GM12878 (cell line): ENCODE measurements at regions of chr16 and their contacts with region 1.

Region 1: GRCh38 chr16:89708441-89708931 is 7.0 kb upstream of the SPATA2L start:
- DNase-seq: no peak
- ATAC-seq: no peak
- H3K4me3 ChIP-seq: no peak overlapping the region
- H3K27ac ChIP-seq: no peak overlapping the region
- H3K4me1 ChIP-seq: no peaks in the 10 kb centered on the region
- H3K27me3 ChIP-seq: no peaks in the 10 kb centered on the region
- CTCF ChIP-seq: no peak
- EP300 ChIP-seq: no peak
- POLR2A ChIP-seq: no peak
- RAD21 ChIP-seq: no peak

Region 2: GRCh38 chr16:88633684-88634140 is 1074.8 kb before region 1 on chr16:
- CTCF ChIA-PET with region 1: no interaction called
- POLR2A ChIA-PET with region 1: no interaction called
- RAD21 ChIA-PET with region 1: no interaction called
- SMC1A ChIA-PET with region 1: no interaction called
- in situ Hi-C with region 1: no loop called
- intact Hi-C with region 1: no loop called
- DNase-seq: peak; percentile 55
- ATAC-seq: peak; percentile 77
- H3K4me3 ChIP-seq: peak overlapping the region; percentile 95; the same call in 1 of the 2 replicates
- H3K27ac ChIP-seq: peak overlapping the region; percentile 52
- H3K4me1 ChIP-seq: peaks cover 22% of the 10 kb centered on the region
- H3K27me3 ChIP-seq: peaks cover 4 to 6% of the 10 kb centered on the region in 2 experiments; a peak in 2 of 4 replicates
- CTCF ChIP-seq: peak; percentile 37 to 68 (median 65); a peak in 5 of 6 replicates
- EP300 ChIP-seq: no peak
- POLR2A ChIP-seq: no peak
- RAD21 ChIP-seq: peak; percentile 47; the same call in 1 of the 2 replicates

Region 3: GRCh38 chr16:89720813-89721545 is 12.5 kb after region 1 on chr16 and contains the starts of genes VPS9D1 and ZNF276:
- CTCF ChIA-PET with region 1: interaction called, 12 read pairs
- POLR2A ChIA-PET with region 1: interaction called, 3 read pairs
- RAD21 ChIA-PET with region 1: interaction called, 6 read pairs
- SMC1A ChIA-PET with region 1: interaction called, 5 read pairs
- in situ Hi-C with region 1: no loop called
- intact Hi-C with region 1: no loop called
- DNase-seq: no peak
- ATAC-seq: peak; percentile 78
- H3K4me3 ChIP-seq: peak within 1 kb of the TSS; percentile 93
- H3K27ac ChIP-seq: peak within 1 kb of the TSS; percentile 63
- H3K4me1 ChIP-seq: peaks cover 31% of the 10 kb centered on the region
- H3K27me3 ChIP-seq: no peaks in the 10 kb centered on the region
- CTCF ChIP-seq: no peak
- EP300 ChIP-seq: no peak
- POLR2A ChIP-seq: peak; percentile 81
- RAD21 ChIP-seq: no peak
- polyA plus RNA-seq, gene VPS9D1: 0.85 to 1.1 TPM
- polyA plus RNA-seq, gene ZNF276: 0.27 to 0.93 TPM

Region 4: GRCh38 chr16:89749647-89750046 is 41.2 kb after region 1 on chr16:
- CTCF ChIA-PET with region 1: no interaction called
- POLR2A ChIA-PET with region 1: no interaction called
- RAD21 ChIA-PET with region 1: no interaction called
- SMC1A ChIA-PET with region 1: no interaction called
- in situ Hi-C with region 1: no loop called
- intact Hi-C with region 1: no loop called
- DNase-seq: no peak
- ATAC-seq: no peak; the same call in 1 of the 3 replicates
- H3K4me3 ChIP-seq: no peak overlapping the region
- H3K27ac ChIP-seq: no peak overlapping the region
- H3K4me1 ChIP-seq: no peaks in the 10 kb centered on the region; the same call in 1 of the 2 replicates
- H3K27me3 ChIP-seq: no peaks in the 10 kb centered on the region
- CTCF ChIP-seq: no peak
- EP300 ChIP-seq: no peak
- POLR2A ChIP-seq: no peak
- RAD21 ChIP-seq: no peak

Region 5: DNA sequence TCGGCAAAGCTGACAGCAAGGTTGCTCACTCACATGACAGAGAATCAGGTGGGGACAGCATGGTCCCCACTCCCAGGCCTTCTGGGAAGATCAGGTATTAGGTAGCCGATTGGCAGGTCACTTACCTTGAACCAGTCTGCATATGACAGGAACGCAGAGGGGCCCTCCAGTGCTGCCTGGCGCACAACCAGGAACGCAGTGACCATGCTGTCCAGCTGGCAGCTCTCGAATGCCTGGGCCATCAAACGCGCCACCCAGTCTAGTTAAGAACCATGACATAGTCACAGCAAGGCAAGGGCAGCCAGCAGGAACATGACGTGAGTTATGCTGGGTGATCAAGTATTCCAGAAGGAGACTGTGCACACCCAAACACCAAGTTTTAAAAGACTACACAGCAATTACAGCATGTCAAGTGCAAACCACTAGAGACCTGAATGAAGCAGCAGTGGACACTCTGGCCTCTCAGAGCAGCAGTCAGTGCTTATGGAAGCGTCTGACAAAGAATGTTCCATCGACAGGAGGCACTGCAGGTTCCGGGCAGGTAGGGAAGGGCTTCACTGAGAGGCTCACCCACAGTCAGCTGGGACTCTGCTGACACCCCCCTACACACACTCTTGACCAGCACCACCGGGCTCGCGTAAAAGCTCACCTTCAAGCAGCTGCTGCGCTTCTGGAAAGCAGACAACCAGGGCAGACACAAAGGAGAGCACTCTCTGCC is 83.0 kb after region 1 on chr16:
- CTCF ChIA-PET with region 1: interaction called, 82 read pairs
- POLR2A ChIA-PET with region 1: interaction called, 3 read pairs
- RAD21 ChIA-PET with region 1: interaction called, 33 read pairs
- SMC1A ChIA-PET with region 1: interaction called, 39 read pairs
- in situ Hi-C with region 1: loop called (anchors 10 kb)
- intact Hi-C with region 1: loop called (anchors 1 kb)
- DNase-seq: no peak
- ATAC-seq: no peak
- H3K4me3 ChIP-seq: no peak overlapping the region
- H3K27ac ChIP-seq: no peak overlapping the region
- H3K4me1 ChIP-seq: no peaks in the 10 kb centered on the region
- H3K27me3 ChIP-seq: no peaks in the 10 kb centered on the region
- CTCF ChIP-seq: no peak
- EP300 ChIP-seq: no peak
- POLR2A ChIP-seq: no peak
- RAD21 ChIP-seq: no peak

Region 6: GRCh38 chr16:89909777-89910716 is 201.6 kb after region 1 on chr16:
- CTCF ChIA-PET with region 1: interaction called, 12 read pairs
- POLR2A ChIA-PET with region 1: interaction called, 3 read pairs
- RAD21 ChIA-PET with region 1: interaction called, 10 read pairs
- SMC1A ChIA-PET with region 1: interaction called, 5 read pairs
- in situ Hi-C with region 1: no loop called
- intact Hi-C with region 1: loop called (anchors 10 kb)
- DNase-seq: no peak
- ATAC-seq: peak; percentile 96
- H3K4me3 ChIP-seq: no peak overlapping the region
- H3K27ac ChIP-seq: no peak overlapping the region
- H3K4me1 ChIP-seq: no peaks in the 10 kb centered on the region
- H3K27me3 ChIP-seq: no peaks in the 10 kb centered on the region
- CTCF ChIP-seq: peak; percentile 79 to 92 (median 92)
- EP300 ChIP-seq: no peak
- POLR2A ChIP-seq: peak; percentile 18; the same call in 1 of the 2 replicates
- RAD21 ChIP-seq: peak; percentile 59